ENCODE measurements at regions of chr2 and their contacts with region 1.

Region 1: GRCh38 chr2:25951071-25951547 is 31.2 kb downstream of the KIF3C start:
- DNase-seq: peak; percentile 63 to 88
- ATAC-seq: peak; percentile 88 to 98 (median 96)
- H3K4me3 ChIP-seq: no peak overlapping the region
- H3K4me3 Mint-ChIP-seq: no peak overlapping the region
- H3K27ac ChIP-seq: no peak overlapping the region
- H3K27ac Mint-ChIP-seq: no peak overlapping the region
- H3K4me1 ChIP-seq: peaks cover 3% of the 10 kb centered on the region
- H3K4me1 Mint-ChIP-seq: peaks cover 0 to 5% of the 10 kb centered on the region in 2 donors
- H3K27me3 ChIP-seq: no peaks in the 10 kb centered on the region
- H3K27me3 Mint-ChIP-seq: no peaks in the 10 kb centered on the region
- CTCF ChIP-seq: peak; percentile 93

Region 2: DNA sequence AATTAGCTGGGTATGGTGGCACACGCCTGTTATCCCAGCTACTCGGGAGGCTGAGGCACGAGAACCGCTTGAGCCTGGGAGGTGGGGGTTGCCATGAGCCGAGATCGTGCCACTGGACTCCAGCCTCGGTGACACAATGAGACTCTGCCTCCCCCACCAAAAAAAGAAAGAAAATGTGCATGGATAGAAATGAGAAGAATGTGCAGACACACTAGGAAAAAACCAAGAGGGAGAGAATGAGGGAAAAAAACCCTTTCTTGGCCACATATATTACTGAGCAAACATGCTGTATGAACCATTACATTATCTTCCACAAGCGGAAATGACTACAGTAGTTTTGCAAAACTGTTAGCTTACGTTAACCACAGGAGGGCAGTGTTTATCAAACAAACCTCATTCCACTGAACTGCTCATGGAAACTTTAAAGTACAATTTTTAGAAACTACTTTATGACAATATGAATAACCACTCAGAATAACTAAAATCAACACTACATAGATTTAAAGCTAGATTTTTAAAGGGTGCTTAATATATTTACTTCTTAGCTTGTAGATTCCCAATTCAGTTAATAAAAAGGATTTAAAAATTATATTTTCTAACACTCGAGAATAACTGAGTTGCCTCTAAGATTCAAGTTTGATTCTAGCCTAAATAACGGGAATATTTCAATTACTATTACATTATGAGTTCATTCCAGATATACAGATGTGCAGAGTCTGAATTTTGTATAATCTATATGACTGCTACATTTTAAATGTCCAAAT is 99.2 kb before region 1 on chr2:
- intact Hi-C with region 1: loop called (anchors 2 kb)
- DNase-seq: peak in 1 of 2 donors; percentile 84
- ATAC-seq: peak; percentile 98 to 100 (median 99)
- H3K4me3 ChIP-seq: no peak overlapping the region
- H3K4me3 Mint-ChIP-seq: peak overlapping the region; percentile 76
- H3K27ac ChIP-seq: peak overlapping the region; percentile 19
- H3K27ac Mint-ChIP-seq: peak overlapping the region; percentile 27 to 84
- H3K4me1 ChIP-seq: peaks cover 5% of the 10 kb centered on the region
- H3K4me1 Mint-ChIP-seq: peaks cover 29 to 47% of the 10 kb centered on the region in 2 donors
- H3K27me3 ChIP-seq: no peaks in the 10 kb centered on the region
- H3K27me3 Mint-ChIP-seq: no peaks in the 10 kb centered on the region
- CTCF ChIP-seq: peak; percentile 70

Region 3: DNA sequence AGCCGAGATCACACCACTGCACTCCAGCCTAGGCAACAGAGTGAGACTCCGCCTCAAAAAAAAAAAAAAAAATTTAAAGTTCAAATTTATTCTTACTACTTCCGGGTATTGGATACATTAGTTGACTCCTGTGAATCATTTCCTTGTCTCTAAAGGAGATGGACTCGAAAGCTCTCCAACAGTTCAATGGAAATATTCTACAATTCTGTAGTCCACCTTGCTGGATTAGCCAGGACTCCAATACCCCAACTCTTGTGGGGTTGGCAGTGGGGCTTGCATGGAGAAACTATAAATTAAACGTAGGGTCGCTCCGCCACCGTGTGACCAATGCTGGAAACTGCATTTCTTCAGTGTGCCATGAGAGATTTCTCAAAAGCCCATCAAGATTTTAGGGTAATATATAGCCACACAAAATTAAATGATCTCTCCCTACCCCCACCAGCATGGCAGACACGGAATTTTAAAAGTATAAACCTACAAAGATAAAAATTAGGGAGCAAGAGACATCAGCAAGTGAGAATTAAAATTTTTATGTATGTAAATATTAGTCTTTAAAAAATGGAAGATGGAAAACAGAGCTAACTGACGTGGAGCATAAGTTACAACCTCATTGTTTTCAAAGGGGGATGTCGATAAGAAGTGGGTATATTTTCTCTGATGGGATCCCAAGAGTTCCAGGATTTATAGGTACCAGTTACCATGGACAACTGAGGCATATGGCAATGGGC is 194.0 kb after region 1 on chr2:
- intact Hi-C with region 1: loop called (anchors 1 kb)
- DNase-seq: peak; percentile 42 to 78
- ATAC-seq: peak; percentile 71 to 91 (median 84)
- H3K4me3 ChIP-seq: no peak overlapping the region
- H3K4me3 Mint-ChIP-seq: no peak overlapping the region
- H3K27ac ChIP-seq: no peak overlapping the region
- H3K27ac Mint-ChIP-seq: no peak overlapping the region
- H3K4me1 ChIP-seq: no peaks in the 10 kb centered on the region
- H3K4me1 Mint-ChIP-seq: peaks cover 5% of the 10 kb centered on the region in 2 donors
- H3K27me3 ChIP-seq: no peaks in the 10 kb centered on the region
- H3K27me3 Mint-ChIP-seq: peaks cover 3 to 8% of the 10 kb centered on the region in 2 donors
- CTCF ChIP-seq: peak; percentile 72

Region 4: DNA sequence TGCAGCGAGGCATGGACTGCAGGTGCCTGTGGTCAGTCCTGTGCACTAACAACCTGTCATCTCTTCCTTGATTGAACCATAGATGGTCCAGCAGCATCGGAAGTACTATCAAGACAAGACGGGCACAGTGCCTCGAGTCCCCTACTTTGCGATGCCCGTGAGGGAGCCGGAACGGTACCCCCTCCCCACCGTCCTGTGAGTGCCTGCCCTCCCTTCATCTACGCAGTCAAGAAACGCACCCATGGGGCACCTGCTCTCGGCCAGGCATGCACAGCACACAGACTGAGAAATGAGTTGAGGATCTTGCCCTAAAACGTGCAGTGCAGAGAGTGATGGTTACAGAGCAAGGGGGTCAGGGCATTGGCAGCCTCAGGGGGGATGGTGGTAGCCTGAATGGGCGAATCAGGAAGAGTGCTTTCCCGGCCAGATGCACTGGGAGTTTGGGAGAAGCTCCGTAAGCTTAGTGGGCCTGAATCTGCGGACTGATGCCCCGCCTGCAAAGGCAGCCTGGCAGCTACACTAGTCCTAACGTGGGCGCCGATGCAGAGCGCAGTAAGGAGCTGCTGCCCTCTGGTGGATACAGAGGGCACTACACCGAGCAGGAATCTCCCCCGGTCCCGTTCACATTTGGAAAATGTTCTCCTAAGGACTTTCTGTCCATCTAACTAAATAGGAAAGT is 626.5 kb after region 1 on chr2:
- intact Hi-C with region 1: loop called (anchors 2 kb)
- DNase-seq: peak; percentile 46 to 79
- ATAC-seq: peak; percentile 82 to 95 (median 90)
- H3K4me3 ChIP-seq: no peak overlapping the region
- H3K4me3 Mint-ChIP-seq: no peak overlapping the region
- H3K27ac ChIP-seq: no peak overlapping the region
- H3K27ac Mint-ChIP-seq: no peak overlapping the region
- H3K4me1 ChIP-seq: no peaks in the 10 kb centered on the region
- H3K4me1 Mint-ChIP-seq: no peaks in the 10 kb centered on the region
- H3K27me3 ChIP-seq: no peaks in the 10 kb centered on the region
- H3K27me3 Mint-ChIP-seq: peaks cover 18 to 29% of the 10 kb centered on the region in 2 donors
- CTCF ChIP-seq: peak; percentile 97